AG04450 (cell line): ENCODE measurements at regions of chr18 and their contacts with region 1.

Region 1: DNA sequence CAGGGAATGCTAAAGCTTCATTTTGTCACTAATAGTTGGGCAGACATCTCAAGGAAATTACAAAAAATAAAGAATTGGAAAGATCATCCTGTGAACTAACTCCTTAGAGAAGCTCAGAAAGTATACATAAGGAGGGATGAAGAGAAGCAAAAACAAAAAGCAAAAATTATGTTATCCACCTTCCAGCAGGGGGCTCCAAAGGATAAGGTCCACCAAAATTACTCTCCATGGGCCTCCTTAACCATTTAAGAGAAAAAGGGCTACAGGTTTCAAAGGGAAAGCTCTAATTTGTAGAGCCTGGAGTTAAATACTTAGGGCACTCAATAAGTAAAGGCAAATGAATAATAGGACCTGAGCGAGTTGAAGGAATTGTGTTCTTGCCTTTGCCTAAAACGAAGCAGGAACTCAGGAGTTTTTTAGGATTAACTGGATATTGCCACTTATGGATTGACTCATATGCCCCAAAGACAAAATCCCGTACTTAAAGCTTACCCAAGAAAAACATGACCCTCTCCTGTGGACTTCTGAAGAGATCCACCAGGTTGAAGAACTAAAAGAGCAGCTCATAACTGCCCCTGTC is 1167.9 kb downstream of the DSC3 start:
- DNase-seq: no peak
- H3K4me3 ChIP-seq: no peak overlapping the region
- H3K27ac ChIP-seq: no peak overlapping the region
- H3K27me3 ChIP-seq: no peaks in the 10 kb centered on the region
- CTCF ChIP-seq: 0 out of 2 replicates have a peak, but pooled peaks have one; percentile 31

Region 2: DNA sequence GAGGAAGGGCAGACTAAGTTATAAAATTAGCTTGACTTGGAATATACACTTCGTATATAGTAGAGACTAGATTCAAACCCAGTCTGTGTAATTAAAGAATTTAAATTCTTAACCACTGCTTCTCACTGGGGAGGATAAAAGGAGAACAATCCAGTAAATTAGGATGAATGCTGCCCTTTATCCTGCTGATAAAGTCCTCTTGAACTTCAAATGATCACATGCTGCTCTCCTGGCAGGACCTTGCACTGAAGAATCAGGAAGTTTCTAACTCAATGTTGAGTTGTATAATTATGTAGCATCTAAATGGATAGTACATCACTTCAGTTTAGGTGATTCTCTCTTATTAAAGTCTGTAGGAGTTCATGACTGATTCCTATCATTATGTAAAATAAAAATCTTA is 11.8 kb before region 1 on chr18:
- CTCF ChIA-PET with region 1: interaction called, 10 read pairs
- POLR2A ChIA-PET with region 1: no interaction called
- DNase-seq: no peak
- H3K4me3 ChIP-seq: no peak overlapping the region
- H3K27ac ChIP-seq: no peak overlapping the region
- H3K27me3 ChIP-seq: no peaks in the 10 kb centered on the region
- CTCF ChIP-seq: no peak

Region 3: GRCh38 chr18:30280880-30281470 is 406.4 kb after region 1 on chr18:
- CTCF ChIA-PET with region 1: interaction called, 19 read pairs
- POLR2A ChIA-PET with region 1: no interaction called
- DNase-seq: peak; percentile 1
- H3K4me3 ChIP-seq: no peak overlapping the region
- H3K27ac ChIP-seq: no peak overlapping the region
- H3K27me3 ChIP-seq: no peaks in the 10 kb centered on the region
- CTCF ChIP-seq: peak; percentile 69